ENCODE measurements at regions of chr9 and their contacts with region 1.

Region 1: GRCh38 chr9:76704593-76705204 is 59.5 kb upstream of the PCA3 start:
- DNase-seq: no peak
- ATAC-seq: peak; percentile 79
- H3K4me3 ChIP-seq: no peak overlapping the region
- H3K27ac ChIP-seq: no peak overlapping the region
- H3K4me1 ChIP-seq: no peaks in the 10 kb centered on the region
- H3K27me3 ChIP-seq: peaks cover 9% of the 10 kb centered on the region
- CTCF ChIP-seq: peak; percentile 72

Region 2: DNA sequence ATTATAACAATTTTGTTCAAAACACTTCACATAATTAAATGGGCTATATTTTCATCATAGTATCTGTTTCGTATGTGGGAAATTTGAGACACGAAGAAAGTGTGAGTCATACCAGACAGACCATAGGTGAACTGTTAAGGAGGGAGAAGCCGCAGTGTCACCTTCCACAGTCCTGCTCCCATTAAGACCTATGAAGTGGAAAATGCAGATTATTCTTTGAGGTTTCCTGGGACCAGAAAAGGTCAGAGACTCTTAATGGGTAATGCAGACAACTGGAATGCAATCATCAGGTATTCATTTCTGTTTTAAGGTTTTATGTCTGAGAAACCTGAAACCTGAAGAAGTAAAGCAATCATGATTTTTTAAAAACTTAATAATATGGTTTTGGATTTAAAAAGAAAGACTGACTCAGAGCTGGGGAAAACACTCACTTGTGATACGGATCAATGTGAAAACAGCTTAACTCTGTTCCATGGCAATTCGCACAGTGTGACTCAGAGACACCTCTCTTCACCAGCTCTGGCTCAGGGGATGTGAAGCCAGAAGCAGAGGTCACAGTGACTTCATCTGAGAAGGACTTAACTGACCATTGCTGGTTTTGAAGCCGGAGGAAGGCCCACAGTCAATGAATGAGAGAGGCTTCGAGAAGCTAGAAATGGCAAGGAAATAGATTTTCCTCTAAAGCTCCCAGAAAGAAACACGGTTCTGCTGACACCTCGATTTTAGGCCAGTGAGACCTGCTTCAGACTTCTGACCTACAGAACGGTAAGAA is 263.0 kb before region 1 on chr9:
- intact Hi-C with region 1: loop called (anchors 10 kb)
- DNase-seq: no peak
- ATAC-seq: no peak
- H3K4me3 ChIP-seq: no peak overlapping the region
- H3K27ac ChIP-seq: no peak overlapping the region
- H3K4me1 ChIP-seq: no peaks in the 10 kb centered on the region
- H3K27me3 ChIP-seq: no peaks in the 10 kb centered on the region
- CTCF ChIP-seq: no peak